ENCODE measurements at regions of chr20 and their contacts with region 1.

Region 1: GRCh38 chr20:38833857-38834164 is 28.3 kb downstream of the PPP1R16B start:
- DNase-seq: no peak
- ATAC-seq: peak; percentile 51
- H3K4me3 ChIP-seq: no peak overlapping the region
- H3K27ac ChIP-seq: peak overlapping the region; percentile 77
- H3K4me1 ChIP-seq: peaks cover 54% of the 10 kb centered on the region
- H3K27me3 ChIP-seq: no peaks in the 10 kb centered on the region
- CTCF ChIP-seq: no peak
- EP300 ChIP-seq: no peak
- POLR2A ChIP-seq: no peak
- RAD21 ChIP-seq: no peak

Region 2: DNA sequence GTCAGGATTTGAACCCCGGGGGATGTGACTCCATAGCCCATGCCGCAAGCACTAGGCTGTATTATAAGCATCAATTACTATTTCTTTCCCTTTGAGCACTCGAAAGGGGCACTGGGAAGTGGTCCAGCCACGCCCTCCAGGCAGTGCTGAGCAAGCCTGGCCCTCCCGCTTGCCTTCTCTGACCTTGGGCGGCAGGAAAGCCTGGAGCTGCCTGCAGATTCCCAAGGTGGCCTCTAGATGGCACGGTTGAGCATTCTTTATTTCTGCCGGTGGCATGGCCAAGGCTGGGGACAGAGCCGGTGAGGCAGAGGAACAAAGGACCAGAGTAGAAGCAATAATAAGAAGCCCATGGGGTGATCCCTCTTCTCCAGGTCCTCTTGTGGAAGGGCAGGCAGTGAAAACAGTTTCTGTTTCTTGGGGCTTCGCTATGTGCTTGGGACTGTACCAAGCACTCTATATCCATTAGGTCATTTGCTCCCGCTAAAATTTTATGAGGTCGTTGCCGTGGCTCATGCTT is 200.2 kb before region 1 on chr20:
- CTCF ChIA-PET with region 1: no interaction called
- POLR2A ChIA-PET with region 1: no interaction called
- RAD21 ChIA-PET with region 1: no interaction called
- SMC1A ChIA-PET with region 1: no interaction called
- in situ Hi-C with region 1: no loop called
- intact Hi-C with region 1: no loop called
- DNase-seq: no peak
- ATAC-seq: peak; percentile 98
- H3K4me3 ChIP-seq: no peak overlapping the region
- H3K27ac ChIP-seq: no peak overlapping the region
- H3K4me1 ChIP-seq: no peaks in the 10 kb centered on the region
- H3K27me3 ChIP-seq: peaks cover 2 to 3% of the 10 kb centered on the region in 2 experiments; a peak in 3 of 4 replicates
- CTCF ChIP-seq: peak; percentile 86 to 96 (median 96)
- EP300 ChIP-seq: no peak
- POLR2A ChIP-seq: no peak
- RAD21 ChIP-seq: peak; percentile 64

Region 3: DNA sequence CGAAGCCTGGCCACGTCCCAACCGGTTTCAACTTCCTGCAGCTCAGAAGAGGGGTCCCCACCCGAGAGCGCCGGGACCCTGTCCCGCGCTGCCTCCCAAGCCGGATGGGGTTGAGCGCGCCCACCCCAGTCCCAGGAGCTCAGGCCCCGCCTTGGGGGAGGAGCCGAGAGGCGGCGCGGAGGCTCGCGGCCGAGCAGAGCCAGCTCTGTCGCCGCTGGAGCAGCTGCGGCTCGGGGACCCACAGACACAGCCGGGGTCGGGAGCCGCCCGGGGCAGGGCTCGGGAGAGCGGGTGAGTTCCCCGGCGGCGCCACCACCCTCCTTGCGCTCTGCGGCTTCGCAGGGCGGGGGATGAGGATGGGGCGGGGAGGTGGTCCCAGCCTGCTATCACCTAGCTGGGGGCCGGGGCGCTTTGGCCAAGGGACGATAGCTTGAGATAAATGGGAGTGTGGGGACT is 28.3 kb before region 1 on chr20 and contains the start of gene PPP1R16B:
- CTCF ChIA-PET with region 1: interaction called, 7 read pairs
- POLR2A ChIA-PET with region 1: interaction called, 6 read pairs
- RAD21 ChIA-PET with region 1: interaction called, 23 read pairs
- SMC1A ChIA-PET with region 1: interaction called, 187 read pairs
- in situ Hi-C with region 1: no loop called
- intact Hi-C with region 1: no loop called
- DNase-seq: no peak
- ATAC-seq: peak; percentile 78
- H3K4me3 ChIP-seq: peak within 1 kb of the TSS; percentile 87
- H3K27ac ChIP-seq: peak within 1 kb of the TSS; percentile 84
- H3K4me1 ChIP-seq: peaks cover 31% of the 10 kb centered on the region
- H3K27me3 ChIP-seq: no peaks in the 10 kb centered on the region
- CTCF ChIP-seq: no peak
- EP300 ChIP-seq: no peak
- POLR2A ChIP-seq: peak; percentile 96
- RAD21 ChIP-seq: no peak
- polyA plus RNA-seq, gene PPP1R16B: 13.4 to 14.2 TPM

Region 4: GRCh38 chr20:38812182-38812581 is 21.6 kb before region 1 on chr20:
- CTCF ChIA-PET with region 1: interaction called, 14 read pairs
- POLR2A ChIA-PET with region 1: interaction called, 9 read pairs
- RAD21 ChIA-PET with region 1: interaction called, 23 read pairs
- SMC1A ChIA-PET with region 1: interaction called, 187 read pairs
- in situ Hi-C with region 1: no loop called
- intact Hi-C with region 1: no loop called
- DNase-seq: no peak
- ATAC-seq: no peak
- H3K4me3 ChIP-seq: peak overlapping the region; percentile 60; the same call in 1 of the 2 replicates
- H3K27ac ChIP-seq: peak overlapping the region; percentile 84; the same call in 1 of the 2 replicates
- H3K4me1 ChIP-seq: peaks cover 61% of the 10 kb centered on the region
- H3K27me3 ChIP-seq: no peaks in the 10 kb centered on the region
- CTCF ChIP-seq: no peak
- EP300 ChIP-seq: no peak
- POLR2A ChIP-seq: 0 out of 2 replicates have a peak, but pooled peaks have one; percentile 2
- RAD21 ChIP-seq: no peak

Region 5: DNA sequence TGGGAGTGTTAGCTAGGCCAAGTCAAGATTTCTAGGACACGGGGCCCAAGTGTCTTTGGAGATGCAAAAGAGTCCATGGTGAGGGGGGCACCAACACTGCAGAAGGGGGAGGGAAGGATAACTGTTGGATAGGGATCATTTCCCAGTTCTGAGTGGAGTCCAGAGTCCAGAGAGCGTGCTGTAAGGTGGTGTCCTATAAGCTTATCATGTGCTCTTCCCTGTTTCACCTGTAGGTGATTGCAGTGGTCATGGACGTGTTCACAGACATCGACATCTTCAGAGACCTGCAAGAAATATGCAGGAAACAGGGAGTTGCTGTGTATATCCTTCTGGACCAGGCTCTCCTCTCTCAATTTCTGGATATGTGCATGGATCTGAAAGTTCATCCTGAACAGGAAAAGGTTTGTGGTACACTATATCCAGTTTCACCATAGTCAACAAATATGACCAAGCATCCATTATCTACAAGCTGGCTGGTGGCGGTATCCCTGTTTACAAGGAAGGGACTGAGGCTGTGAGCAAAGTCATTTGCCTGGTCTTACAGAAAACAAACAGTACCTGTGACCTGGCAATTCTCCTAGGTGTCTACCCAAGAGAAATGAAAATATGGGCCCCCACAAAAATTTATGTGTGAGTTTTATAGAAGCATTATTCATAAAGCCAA is 108.0 kb after region 1 on chr20:
- CTCF ChIA-PET with region 1: no interaction called
- POLR2A ChIA-PET with region 1: no interaction called
- RAD21 ChIA-PET with region 1: no interaction called
- SMC1A ChIA-PET with region 1: no interaction called
- in situ Hi-C with region 1: no loop called
- intact Hi-C with region 1: no loop called
- DNase-seq: no peak
- ATAC-seq: no peak
- H3K4me3 ChIP-seq: no peak overlapping the region
- H3K27ac ChIP-seq: no peak overlapping the region
- H3K4me1 ChIP-seq: no peaks in the 10 kb centered on the region; the same call in 1 of the 2 replicates
- H3K27me3 ChIP-seq: no peaks in the 10 kb centered on the region
- CTCF ChIP-seq: peak in 1 of 3 experiments; percentile 2; a peak in 1 of 6 replicates
- EP300 ChIP-seq: no peak
- POLR2A ChIP-seq: no peak
- RAD21 ChIP-seq: no peak

Measured in GM12878 (cell line).